GM10248 (cell line): ENCODE measurements at regions of chr1 and their contacts with region 1.

Region 1: DNA sequence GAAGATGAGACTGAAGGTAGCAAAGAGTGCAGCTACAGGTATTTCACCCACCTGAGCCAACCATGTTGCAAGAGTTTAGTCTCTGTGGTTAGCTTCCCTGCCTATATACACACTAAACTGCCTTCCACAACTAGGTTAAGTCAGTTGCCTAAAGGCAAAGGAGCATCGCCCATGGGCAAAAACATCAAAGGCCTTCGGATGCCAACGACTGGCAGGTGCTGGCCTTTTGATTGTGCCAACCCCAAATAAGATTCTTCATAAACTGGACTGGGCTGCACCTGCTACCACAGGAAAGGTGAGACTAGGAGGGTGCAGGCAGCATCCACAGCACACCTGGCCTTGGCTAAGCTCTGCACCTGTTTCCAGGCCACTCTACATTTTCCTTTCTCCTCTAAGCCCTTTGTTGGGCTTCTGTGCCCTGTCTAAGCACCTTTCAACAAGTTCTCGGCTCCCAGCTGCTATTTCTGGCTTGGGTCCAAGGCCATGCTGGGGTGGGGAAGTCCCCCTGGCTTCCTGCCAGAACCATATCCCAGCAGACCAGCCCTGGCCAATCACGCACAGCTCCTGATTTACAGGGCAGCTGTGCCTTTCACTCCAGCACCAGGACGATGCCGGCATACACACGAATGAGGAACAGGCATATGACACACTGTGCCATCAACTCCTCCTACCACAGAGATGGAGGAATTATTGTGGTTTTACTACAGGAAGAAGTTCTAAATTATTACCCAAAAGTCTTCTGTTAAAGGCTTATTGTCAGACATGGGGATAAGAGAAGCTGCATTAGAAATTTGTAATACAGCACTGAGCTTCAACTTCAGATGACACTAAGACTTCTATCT is 37.8 kb downstream of the TRIT1 start:
- DNase-seq: peak; percentile 45
- CTCF ChIP-seq: no peak

Region 2: DNA sequence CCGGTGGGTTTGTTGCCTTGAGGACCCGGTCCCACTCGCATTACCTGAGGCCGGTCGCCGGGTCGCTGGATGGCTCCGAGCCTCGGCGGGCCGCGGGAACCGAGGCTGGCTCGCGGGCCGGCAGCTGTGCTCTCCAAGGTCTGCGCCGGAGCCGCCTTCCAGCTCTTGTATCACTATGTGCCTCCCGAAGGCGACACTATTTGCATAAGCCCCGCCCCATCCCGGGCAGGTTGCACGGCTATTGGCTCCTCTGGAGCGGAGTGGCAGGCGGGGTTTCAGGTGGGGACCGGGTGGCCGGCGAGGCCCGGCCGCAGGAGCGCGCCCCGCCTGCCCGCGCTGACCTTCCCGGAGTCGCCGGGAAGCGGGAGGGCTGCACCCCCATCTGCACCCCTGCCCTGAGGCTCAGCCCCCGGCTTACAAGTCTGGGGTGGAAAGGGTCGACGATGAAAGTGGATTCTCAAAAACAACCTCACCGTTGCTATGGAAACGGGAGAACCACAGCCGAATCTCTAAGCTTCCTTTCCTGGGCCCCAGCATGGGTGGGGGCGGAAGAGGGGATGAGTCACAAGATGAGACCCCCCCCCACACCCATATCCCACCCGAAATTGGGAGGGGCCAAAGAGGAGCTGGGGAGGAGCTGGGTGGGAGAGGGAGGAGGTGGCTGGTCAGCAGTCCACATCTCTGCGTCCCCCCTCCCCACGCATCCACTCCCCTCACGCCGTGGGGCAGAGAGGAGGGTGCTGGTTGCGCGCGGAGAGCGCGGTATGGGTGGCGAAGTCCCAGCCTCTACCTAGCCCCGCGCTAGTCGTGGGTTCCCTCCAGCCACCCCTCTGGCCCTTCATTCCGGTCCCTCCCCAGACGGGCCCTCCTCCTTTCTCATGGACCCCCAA is 154.0 kb before region 1 on chr1 and contains the start of gene HPCAL4:
- CTCF ChIA-PET with region 1: no interaction called
- POLR2A ChIA-PET with region 1: no interaction called
- DNase-seq: peak; percentile 85
- CTCF ChIP-seq: no peak

Region 3: GRCh38 chr1:39829791-39830533 is 15.5 kb before region 1 on chr1:
- CTCF ChIA-PET with region 1: interaction called, 10 read pairs
- POLR2A ChIA-PET with region 1: no interaction called
- DNase-seq: no peak
- CTCF ChIP-seq: no peak

Region 4: GRCh38 chr1:39857126-39857878 is 11.8 kb after region 1 on chr1:
- CTCF ChIA-PET with region 1: interaction called, 10 read pairs
- POLR2A ChIA-PET with region 1: no interaction called
- DNase-seq: no peak
- CTCF ChIP-seq: no peak

Region 5: GRCh38 chr1:40232444-40232843 is 386.9 kb after region 1 on chr1:
- CTCF ChIA-PET with region 1: no interaction called
- POLR2A ChIA-PET with region 1: no interaction called
- DNase-seq: peak; percentile 73
- CTCF ChIP-seq: no peak